Right ventricle myocardium superior (tissue), 1 donor: ENCODE measurements at regions of chr3 and their contacts with region 1.

Region 1: GRCh38 chr3:46996707-46997432 is 17.4 kb downstream of the NBEAL2 start:
- DNase-seq: peak; percentile 20
- ATAC-seq: no peak

Region 2: GRCh38 chr3:46923559-46924350 is 73.1 kb before region 1 on chr3:
- intact Hi-C with region 1: loop called (anchors 2 kb)
- DNase-seq: peak; percentile 61
- ATAC-seq: peak; percentile 38

Region 3: GRCh38 chr3:47464588-47464987 is 467.7 kb after region 1 on chr3:
- intact Hi-C with region 1: no loop called
- DNase-seq: no peak
- ATAC-seq: no peak

Region 4: DNA sequence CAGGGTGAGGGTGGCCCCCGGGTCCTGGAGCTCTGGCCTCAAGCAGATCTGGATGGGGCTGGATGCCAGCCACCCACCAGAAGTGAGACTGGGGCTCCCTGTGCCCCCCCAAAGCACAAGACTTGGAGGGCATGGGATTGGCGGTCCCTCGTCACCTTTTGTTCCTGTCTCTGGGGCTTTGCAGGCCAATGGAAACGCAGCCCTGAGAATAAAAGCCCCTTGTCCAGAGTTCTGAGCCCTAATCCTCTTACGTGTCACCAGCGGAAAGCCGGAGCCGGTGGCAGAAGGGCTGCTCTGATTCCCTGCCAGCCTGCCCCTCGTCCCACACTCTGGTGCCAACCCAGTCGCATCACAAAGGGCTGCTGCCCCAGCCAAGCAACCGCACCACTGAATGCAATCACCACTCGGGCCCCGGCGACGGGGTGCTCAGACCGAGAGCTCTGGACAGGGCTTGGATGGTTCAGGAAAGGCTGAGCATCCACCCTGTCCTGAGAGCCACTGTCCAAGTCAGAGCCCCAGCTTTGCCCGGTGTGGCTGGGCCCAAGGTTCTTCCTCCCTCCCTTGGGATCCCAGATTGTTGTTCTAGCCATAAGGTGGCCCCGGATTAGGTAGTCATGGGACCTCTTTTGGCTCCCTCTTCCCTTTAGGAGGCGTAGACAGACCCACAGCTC is 539.5 kb after region 1 on chr3:
- intact Hi-C with region 1: no loop called
- DNase-seq: no peak
- ATAC-seq: no peak